Endothelial cell of umbilical vein (primary cell): ENCODE measurements at regions of chr10 and their contacts with region 1.

Region 1: GRCh38 chr10:96586419-96587263 is at the start of gene TM9SF3:
- DNase-seq: peak; percentile 84
- H3K4me3 ChIP-seq: peak within 1 kb of the TSS; percentile 59 to 92 (median 61)
- H3K27ac ChIP-seq: peak within 1 kb of the TSS; percentile 98
- H3K4me1 ChIP-seq: peaks cover 53% of the 10 kb centered on the region
- H3K27me3 ChIP-seq: no peaks in the 10 kb centered on the region
- CTCF ChIP-seq: no peak
- POLR2A ChIP-seq: peak; percentile 26
- total RNA-seq, gene TM9SF3: 142 and 144 TPM in 2 replicates

Region 2: GRCh38 chr10:96565774-96566173 is 20.9 kb before region 1 on chr10:
- CTCF ChIA-PET with region 1: interaction called, 3 read pairs
- POLR2A ChIA-PET with region 1: no interaction called
- dilution Hi-C with region 1: no loop called
- intact Hi-C with region 1: loop called (anchors 2 kb)
- DNase-seq: peak; percentile 65
- H3K4me3 ChIP-seq: no peak overlapping the region
- H3K27ac ChIP-seq: no peak overlapping the region
- H3K4me1 ChIP-seq: peaks cover 6% of the 10 kb centered on the region
- H3K27me3 ChIP-seq: no peaks in the 10 kb centered on the region
- CTCF ChIP-seq: no peak
- POLR2A ChIP-seq: no peak

Region 3: GRCh38 chr10:96863922-96864543 is 277.4 kb after region 1 on chr10:
- CTCF ChIA-PET with region 1: no interaction called
- POLR2A ChIA-PET with region 1: no interaction called
- dilution Hi-C with region 1: no loop called
- intact Hi-C with region 1: loop called (anchors 1 kb)
- DNase-seq: peak; percentile 79
- H3K4me3 ChIP-seq: peak overlapping the region in 1 of 3 experiments; percentile 15
- H3K27ac ChIP-seq: peak overlapping the region; percentile 62
- H3K4me1 ChIP-seq: peaks cover 17% of the 10 kb centered on the region
- H3K27me3 ChIP-seq: no peaks in the 10 kb centered on the region
- CTCF ChIP-seq: no peak
- POLR2A ChIP-seq: no peak